ENCODE measurements at regions of chr16 and their contacts with region 1.

Region 1: DNA sequence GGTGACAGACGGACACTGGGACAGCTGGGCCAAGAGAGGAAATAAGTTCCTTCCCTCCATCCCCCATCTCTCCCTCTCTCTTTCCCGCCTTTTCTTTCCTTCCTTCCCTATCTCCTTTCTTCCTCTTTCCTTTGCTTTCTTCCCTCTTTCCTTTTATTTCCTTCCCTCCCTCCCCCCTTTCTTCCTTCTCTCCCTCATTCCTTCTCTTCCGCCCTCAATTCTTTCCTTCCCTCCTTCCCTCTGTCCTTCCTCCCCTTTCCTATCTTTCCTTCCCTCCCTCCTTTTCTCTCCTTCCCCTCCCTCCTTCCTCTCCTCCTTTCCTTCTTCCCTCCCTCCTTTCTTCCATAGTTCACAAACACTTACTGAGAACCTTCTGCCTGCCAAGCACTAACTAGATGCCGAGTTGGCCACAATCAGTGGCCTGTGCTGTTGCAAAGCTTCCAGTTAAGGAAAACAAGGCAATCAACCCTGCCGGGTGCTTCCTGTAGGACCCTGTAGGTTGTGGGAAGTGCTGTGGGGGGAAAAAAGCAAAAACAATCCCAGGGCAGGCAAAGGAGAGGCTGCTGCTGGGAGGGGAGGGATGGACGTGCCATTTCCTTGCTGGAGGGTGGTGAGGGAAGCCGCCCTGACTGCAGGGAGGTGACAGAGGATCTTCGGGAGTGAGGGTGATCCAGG is 31.7 kb downstream of the ABCC6 start:
- DNase-seq: no peak
- ATAC-seq: no peak
- H3K4me3 ChIP-seq: no peak overlapping the region
- H3K27ac ChIP-seq: no peak overlapping the region
- H3K4me1 ChIP-seq: no peaks in the 10 kb centered on the region
- H3K27me3 ChIP-seq: no peaks in the 10 kb centered on the region

Region 2: GRCh38 chr16:15757630-15758251 is 433.9 kb before region 1 on chr16:
- intact Hi-C with region 1: loop called in 1 of 4 experiments (anchors 10 kb)
- DNase-seq: no peak
- ATAC-seq: peak; percentile 28 to 31
- H3K4me3 ChIP-seq: no peak overlapping the region
- H3K27ac ChIP-seq: no peak overlapping the region
- H3K4me1 ChIP-seq: no peaks in the 10 kb centered on the region
- H3K27me3 ChIP-seq: no peaks in the 10 kb centered on the region

Region 3: DNA sequence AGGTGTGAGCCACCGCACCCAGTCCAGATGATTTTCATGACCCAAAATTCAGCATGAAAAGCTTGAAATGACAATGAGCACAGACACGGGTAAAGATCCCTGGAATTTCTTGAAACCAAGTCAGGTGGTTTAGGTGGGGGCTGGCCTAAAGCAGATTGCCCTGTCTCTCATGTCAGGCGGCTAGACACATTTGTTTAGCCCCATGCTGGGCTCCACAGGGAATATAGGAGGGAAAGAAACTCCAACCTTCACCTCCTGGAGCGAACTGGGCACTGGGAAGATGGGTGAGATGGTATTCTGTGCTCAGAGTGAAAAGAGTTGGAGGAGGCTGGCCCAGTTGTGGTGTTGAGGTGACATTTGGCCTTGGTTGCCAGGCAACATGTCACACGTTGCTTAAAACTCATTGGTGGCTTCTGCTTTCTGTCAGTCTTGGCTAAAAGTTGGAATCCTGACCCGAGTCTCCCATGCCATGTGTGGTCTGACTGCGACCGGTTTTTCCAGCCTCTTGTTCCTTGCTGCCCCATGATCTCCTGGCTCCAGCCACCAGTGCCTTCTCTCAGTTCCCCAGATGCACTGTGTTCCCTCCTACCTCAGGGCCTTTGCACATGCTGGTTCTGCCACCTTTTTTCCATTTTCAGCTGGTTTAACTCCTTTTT is 82.0 kb before region 1 on chr16:
- intact Hi-C with region 1: no loop called
- DNase-seq: no peak
- ATAC-seq: no peak
- H3K4me3 ChIP-seq: no peak overlapping the region
- H3K27ac ChIP-seq: no peak overlapping the region
- H3K4me1 ChIP-seq: no peaks in the 10 kb centered on the region
- H3K27me3 ChIP-seq: no peaks in the 10 kb centered on the region

Measured in right cardiac atrium (tissue), 5 donors.